Ovary (tissue), 10 donors: ENCODE measurements at regions of chr16 and their contacts with region 1.

Region 1: DNA sequence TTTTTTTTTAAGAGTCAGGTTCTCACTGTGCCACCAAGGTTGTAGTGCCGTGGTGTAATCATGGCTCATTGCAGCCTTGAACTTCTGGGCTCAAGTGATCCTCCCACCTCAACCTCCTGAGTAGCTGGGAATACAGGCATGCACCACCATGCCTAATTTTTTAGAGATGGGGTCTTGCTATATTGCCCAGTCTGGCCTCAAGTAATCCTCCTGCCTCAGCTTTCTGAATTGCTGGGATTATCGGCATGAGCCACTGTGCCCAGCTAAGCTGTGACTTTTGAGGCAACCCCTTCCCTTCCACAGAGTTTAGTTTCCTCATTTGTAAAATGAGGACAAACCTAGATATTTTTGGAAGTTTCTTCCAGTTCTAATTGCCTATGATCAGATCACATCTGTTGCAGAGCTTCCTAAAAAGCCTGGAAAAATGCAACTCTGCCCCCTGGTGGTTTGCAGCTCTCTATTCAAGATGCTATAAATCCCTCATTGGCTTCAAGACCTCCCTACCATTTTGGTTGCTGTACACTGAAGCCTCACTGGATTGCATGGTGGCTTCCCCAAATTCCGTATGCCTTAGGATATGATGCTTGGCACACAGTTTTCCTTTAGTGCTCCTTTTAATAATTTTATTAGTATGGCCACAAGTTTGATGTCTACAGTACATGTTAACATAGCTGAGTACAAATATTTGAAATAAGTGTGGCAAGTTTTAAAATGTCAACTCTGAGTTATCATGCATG is 19.3 kb downstream of the GDE1 start:
- DNase-seq: peak; percentile 34 to 73 (median 63)
- H3K4me3 ChIP-seq: no peak overlapping the region
- H3K27ac ChIP-seq: no peak overlapping the region
- H3K4me1 ChIP-seq: no peaks in the 10 kb centered on the region
- H3K27me3 ChIP-seq: no peaks in the 10 kb centered on the region
- CTCF ChIP-seq: peak; percentile 32 to 41 (median 34)
- EP300 ChIP-seq: no peak
- POLR2A ChIP-seq: no peak

Region 2: DNA sequence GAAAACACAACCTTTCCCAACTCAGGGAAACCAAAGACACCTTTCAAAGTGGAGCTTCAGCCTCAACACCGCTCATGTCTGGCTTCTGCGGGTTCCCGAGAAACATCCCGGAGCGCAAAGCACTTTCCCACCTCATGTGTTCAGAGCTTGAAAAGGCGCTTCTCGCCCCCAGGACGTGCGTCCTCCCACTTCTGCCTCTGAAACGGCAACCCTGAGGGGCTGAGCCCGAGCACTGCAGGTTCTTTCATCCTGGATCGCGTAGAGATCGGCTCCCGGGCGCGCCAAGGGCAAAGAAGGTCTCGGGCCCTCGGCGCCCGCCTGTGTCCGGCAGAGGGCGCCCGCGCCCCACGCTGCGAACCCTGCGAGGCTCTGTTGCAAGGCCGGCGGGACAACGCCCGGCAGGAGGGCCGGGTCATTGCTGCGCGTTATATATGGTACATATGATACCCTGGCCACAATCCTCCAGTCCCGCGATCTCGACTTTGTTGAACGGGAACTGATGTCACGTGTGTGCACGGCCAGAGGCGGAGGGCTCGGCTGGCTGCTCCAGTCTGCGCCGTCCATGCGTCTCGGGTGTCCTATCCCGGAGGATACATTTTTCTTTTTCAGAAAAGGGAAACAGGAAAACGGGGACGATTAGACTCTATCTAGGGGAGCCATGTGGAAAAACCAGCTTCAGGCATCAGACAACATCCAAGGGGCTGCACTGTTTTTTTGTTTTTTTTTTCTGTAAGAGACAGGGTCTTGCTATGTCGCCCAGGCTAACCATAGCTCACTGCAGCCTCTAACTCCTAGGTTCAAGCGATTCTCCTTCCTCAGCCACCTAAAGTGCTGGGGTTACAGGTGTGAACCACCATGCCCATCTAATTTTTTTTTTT is 416.0 kb before region 1 on chr16:
- intact Hi-C with region 1: loop called in 3 of 4 experiments (anchors 5 to 10 kb)
- DNase-seq: peak; percentile 61 to 87 (median 79)
- H3K4me3 ChIP-seq: peak overlapping the region; percentile 15
- H3K27ac ChIP-seq: no peak overlapping the region
- H3K4me1 ChIP-seq: no peaks in the 10 kb centered on the region
- H3K27me3 ChIP-seq: no peaks in the 10 kb centered on the region
- CTCF ChIP-seq: peak; percentile 95 to 97 (median 96)
- EP300 ChIP-seq: no peak
- POLR2A ChIP-seq: no peak

Region 3: GRCh38 chr16:19542138-19542821 is 39.7 kb after region 1 on chr16:
- intact Hi-C with region 1: loop called in 1 of 4 experiments (anchors 2 kb)
- DNase-seq: no peak
- H3K4me3 ChIP-seq: no peak overlapping the region
- H3K27ac ChIP-seq: no peak overlapping the region
- H3K4me1 ChIP-seq: no peaks in the 10 kb centered on the region
- H3K27me3 ChIP-seq: no peaks in the 10 kb centered on the region
- CTCF ChIP-seq: no peak
- EP300 ChIP-seq: no peak
- POLR2A ChIP-seq: no peak

Region 4: GRCh38 chr16:19574615-19575014 is 72.1 kb after region 1 on chr16:
- intact Hi-C with region 1: no loop called
- DNase-seq: no peak
- H3K4me3 ChIP-seq: no peak overlapping the region
- H3K27ac ChIP-seq: no peak overlapping the region
- H3K4me1 ChIP-seq: no peaks in the 10 kb centered on the region
- H3K27me3 ChIP-seq: no peaks in the 10 kb centered on the region
- CTCF ChIP-seq: no peak
- EP300 ChIP-seq: no peak
- POLR2A ChIP-seq: no peak